ENCODE measurements at regions of chr1 and their contacts with region 1.

Region 1: GRCh38 chr1:110766025-110766647 is 91.4 kb upstream of the KCNA3 start:
- DNase-seq: no peak
- H3K4me3 ChIP-seq: no peak overlapping the region
- H3K27ac ChIP-seq: no peak overlapping the region
- H3K4me1 ChIP-seq: peaks cover 0 to 8% (median 2%) of the 10 kb centered on the region in 6 donors
- H3K27me3 ChIP-seq: peaks cover 0 to 7% (median 0%) of the 10 kb centered on the region in 7 donors
- CTCF ChIP-seq: peak; percentile 81 to 93 (median 87)
- POLR2A ChIP-seq: no peak

Region 2: DNA sequence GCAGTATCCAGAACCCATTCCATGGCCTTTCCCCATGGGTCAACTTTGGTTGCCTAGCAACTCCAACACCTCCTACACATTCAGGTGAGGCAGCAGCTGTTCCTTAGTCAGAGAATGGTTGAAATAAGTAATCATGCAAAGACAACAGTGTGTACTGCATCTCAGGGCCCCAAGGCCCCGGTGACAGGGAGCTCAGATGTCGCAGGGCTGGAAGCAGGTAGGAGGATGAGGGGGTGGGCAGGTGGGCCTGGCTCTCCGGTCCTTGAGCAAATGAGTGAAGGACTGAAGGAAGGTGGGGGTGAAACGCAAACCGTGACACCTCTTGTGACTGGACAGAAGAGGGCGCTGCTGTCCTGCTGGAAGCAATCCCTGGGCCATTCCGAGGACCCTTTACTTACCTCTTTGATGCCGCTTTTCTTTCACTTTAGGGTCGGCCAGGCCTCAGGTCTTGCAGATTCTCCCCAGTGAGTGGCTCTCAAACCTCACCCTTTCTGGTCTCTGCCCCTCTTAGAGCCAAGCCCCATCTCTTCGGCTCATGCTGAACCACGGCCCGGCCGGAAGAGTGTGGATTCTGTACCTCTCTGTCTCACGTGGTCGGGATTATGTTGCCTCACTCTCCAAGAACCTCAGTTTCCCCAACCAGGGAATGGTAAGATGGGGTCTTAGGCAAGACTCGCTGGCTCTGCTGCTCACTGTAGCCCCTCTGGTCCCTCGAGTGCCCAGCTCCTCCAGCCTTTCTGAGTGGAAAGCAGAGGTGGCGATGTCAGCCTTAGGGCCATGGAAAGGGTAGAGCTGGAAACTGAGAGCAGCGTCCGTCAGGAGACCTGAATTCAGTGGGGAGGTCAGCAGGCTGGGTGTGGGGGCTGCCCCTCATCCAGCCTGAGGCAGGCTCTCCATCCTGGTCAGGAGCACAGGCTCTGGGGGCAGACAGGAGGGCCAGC is 241.6 kb before region 1 on chr1:
- intact Hi-C with region 1: loop called (anchors 10 kb)
- DNase-seq: no peak
- H3K4me3 ChIP-seq: peak overlapping the region in 2 of 8 donors; percentile 12 to 42
- H3K27ac ChIP-seq: no peak overlapping the region
- H3K4me1 ChIP-seq: peaks cover 0 to 15% (median 10%) of the 10 kb centered on the region in 6 donors
- H3K27me3 ChIP-seq: peaks cover 0 to 36% (median 3%) of the 10 kb centered on the region in 7 donors
- CTCF ChIP-seq: peak in 10 of 11 experiments; percentile 8 to 73 (median 62)
- POLR2A ChIP-seq: no peak

Region 3: DNA sequence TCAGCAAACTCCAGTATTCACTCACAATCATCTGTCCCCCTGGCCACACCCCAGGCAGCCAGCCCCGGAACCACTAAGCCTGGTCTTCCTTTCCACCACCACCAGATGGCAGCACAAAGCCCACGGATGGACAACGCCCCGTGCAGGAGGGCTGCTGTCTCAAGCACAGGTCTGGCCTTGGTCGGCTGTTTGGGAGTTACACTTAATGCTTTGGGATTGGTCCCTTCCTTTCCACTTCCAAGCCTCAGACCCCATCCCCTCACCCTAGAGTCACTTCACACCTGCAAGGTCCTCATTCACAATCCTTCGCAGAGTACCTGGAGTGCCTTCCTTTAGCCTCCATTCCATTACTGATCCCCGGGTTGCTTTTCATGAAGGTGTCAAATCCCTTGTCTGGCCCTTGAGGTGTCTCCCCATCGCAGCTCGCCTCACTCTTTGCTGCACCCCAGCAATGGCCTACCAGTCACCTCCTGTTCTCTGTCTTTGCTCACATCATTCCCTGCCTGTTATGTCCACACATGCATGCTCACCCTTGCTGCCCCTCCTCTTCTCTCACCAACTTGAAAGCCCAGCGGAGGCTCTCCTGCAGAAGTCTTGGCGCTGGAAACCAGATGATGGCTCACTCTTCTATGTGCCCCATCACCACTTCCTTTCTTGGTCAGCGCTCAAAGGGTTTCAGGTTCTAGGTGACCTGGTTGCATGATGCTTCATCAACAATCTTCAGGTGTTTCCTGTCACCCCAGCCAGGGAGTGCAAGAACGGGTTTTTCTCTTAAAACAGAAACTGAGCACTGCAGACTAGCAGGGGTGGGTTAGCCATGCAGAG is 135.1 kb before region 1 on chr1:
- intact Hi-C with region 1: loop called (anchors 5 kb)
- DNase-seq: peak; percentile 94
- H3K4me3 ChIP-seq: peak overlapping the region in 5 of 8 donors; percentile 5 to 53 (median 8)
- H3K27ac ChIP-seq: peak overlapping the region in 5 of 8 donors; percentile 60 to 85 (median 75)
- H3K4me1 ChIP-seq: peaks cover 31 to 79% (median 58%) of the 10 kb centered on the region in 6 donors
- H3K27me3 ChIP-seq: no peaks in the 10 kb centered on the region
- CTCF ChIP-seq: peak; percentile 68 to 95 (median 91)
- POLR2A ChIP-seq: no peak